ENCODE measurements at regions of chr10 and their contacts with region 1.

Region 1: GRCh38 chr10:9718751-9719150 is 1298.9 kb upstream of the CELF2 start:
- DNase-seq: no peak
- H3K4me3 ChIP-seq: no peak overlapping the region
- H3K27ac ChIP-seq: no peak overlapping the region
- H3K4me1 ChIP-seq: no peaks in the 10 kb centered on the region
- H3K27me3 ChIP-seq: no peaks in the 10 kb centered on the region
- CTCF ChIP-seq: no peak

Region 2: DNA sequence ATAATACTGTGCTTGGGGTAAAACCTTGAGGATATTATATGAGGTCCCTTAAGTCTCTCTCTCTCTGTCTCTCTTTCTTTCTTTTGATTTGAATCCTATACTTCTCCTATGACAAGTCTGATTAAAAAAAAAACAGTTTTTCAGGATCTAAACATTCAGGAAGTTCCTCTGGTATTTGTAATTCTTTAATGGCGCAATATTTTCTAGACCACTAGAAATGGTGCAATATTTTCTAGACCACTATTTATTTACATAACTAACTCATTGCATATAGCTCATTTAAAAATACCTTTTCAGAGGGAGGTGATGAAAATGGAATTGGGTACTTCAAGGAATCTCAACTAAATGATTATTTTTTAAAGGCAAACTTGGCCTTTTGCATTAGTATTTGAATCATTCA is 428.9 kb before region 1 on chr10:
- intact Hi-C with region 1: no loop called
- DNase-seq: no peak
- H3K4me3 ChIP-seq: no peak overlapping the region
- H3K27ac ChIP-seq: no peak overlapping the region
- H3K4me1 ChIP-seq: no peaks in the 10 kb centered on the region
- H3K27me3 ChIP-seq: peaks cover 0 to 5% of the 10 kb centered on the region in 2 donors
- CTCF ChIP-seq: no peak

Region 3: GRCh38 chr10:9515922-9516321 is 202.8 kb before region 1 on chr10:
- intact Hi-C with region 1: loop called (anchors 5 kb)
- DNase-seq: no peak
- H3K4me3 ChIP-seq: no peak overlapping the region
- H3K27ac ChIP-seq: no peak overlapping the region
- H3K4me1 ChIP-seq: no peaks in the 10 kb centered on the region
- H3K27me3 ChIP-seq: no peaks in the 10 kb centered on the region
- CTCF ChIP-seq: no peak

Region 4: DNA sequence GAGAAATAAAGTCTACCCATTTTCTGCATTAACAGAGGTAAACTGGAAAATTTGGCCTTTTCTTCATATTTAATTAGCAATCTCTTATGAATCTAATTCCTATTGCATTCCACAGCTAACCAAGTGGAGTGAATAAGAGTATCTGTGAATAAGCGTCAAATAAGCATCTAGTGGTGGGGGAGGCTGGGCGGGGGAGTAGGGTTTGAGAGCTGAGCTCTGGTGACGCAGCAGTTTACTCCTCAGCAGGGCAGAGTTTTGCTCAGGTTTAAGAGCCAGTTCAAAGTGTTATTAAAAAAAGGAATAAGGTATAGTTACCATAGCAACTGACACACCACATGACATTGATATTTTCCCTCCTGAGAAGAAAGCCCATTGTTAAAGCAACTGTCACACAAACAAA is 47.8 kb before region 1 on chr10:
- intact Hi-C with region 1: no loop called
- DNase-seq: no peak
- H3K4me3 ChIP-seq: no peak overlapping the region
- H3K27ac ChIP-seq: no peak overlapping the region
- H3K4me1 ChIP-seq: no peaks in the 10 kb centered on the region
- H3K27me3 ChIP-seq: no peaks in the 10 kb centered on the region
- CTCF ChIP-seq: no peak

Region 5: GRCh38 chr10:9681655-9682054 is 37.1 kb before region 1 on chr10:
- intact Hi-C with region 1: no loop called
- DNase-seq: no peak
- H3K4me3 ChIP-seq: no peak overlapping the region
- H3K27ac ChIP-seq: no peak overlapping the region
- H3K4me1 ChIP-seq: no peaks in the 10 kb centered on the region
- H3K27me3 ChIP-seq: no peaks in the 10 kb centered on the region
- CTCF ChIP-seq: no peak

Region 6: GRCh38 chr10:9900751-9901150 is 182.0 kb after region 1 on chr10:
- intact Hi-C with region 1: no loop called
- DNase-seq: no peak
- H3K4me3 ChIP-seq: no peak overlapping the region
- H3K27ac ChIP-seq: no peak overlapping the region
- H3K4me1 ChIP-seq: no peaks in the 10 kb centered on the region
- H3K27me3 ChIP-seq: no peaks in the 10 kb centered on the region
- CTCF ChIP-seq: no peak